SK-N-SH (cell line): ENCODE measurements at regions of chr17 and their contacts with region 1.

Region 1: GRCh38 chr17:68497885-68498319 is 14.3 kb upstream of the PRKAR1A start:
- DNase-seq: no peak
- H3K4me3 ChIP-seq: no peak overlapping the region
- H3K27ac ChIP-seq: no peak overlapping the region
- H3K4me1 ChIP-seq: peaks cover 0 to 6% of the 10 kb centered on the region in 2 experiments; a peak in 1 of 4 replicates
- H3K27me3 ChIP-seq: no peaks in the 10 kb centered on the region; the same call in 1 of the 2 replicates
- CTCF ChIP-seq: no peak
- EP300 ChIP-seq: no peak
- RAD21 ChIP-seq: no peak

Region 2: DNA sequence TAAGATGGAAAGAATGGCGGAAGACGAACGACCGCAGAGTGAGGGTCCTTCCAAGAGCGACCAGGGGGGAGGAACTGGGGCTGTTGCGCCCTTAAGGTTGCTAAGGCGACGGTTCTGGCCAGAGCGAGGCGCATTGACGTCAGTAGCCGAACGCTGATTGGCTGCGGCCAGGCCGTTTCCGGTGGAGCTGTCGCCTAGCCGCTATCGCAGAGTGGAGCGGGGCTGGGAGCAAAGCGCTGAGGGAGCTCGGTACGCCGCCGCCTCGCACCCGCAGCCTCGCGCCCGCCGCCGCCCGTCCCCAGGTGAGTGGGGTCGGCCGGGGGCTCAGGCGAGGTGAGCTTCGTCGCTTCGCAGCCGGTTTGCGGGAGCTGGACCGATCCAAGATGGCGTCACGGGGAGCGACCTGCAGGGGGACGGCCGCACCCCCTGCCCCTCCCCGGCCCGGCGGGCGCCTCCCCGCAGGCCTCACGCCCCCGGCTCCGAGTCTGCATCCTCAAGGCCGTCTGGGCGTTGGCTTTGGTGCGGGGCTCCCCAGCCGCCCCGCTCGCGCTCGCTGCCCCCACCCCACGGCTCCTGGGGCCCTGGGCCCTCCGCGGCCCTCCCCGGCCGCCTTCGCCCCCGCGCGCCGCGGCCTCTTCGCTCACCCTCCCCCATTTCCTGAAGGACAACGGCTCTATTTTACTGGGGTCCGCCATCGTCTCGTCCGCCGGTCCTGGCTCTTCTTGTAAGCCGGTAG is 14.5 kb after region 1 on chr17 and contains the start of gene PRKAR1A:
- CTCF ChIA-PET with region 1: interaction called, 14 read pairs
- POLR2A ChIA-PET with region 1: interaction called, 3 read pairs
- DNase-seq: peak; percentile 98
- H3K4me3 ChIP-seq: peak within 1 kb of the TSS; percentile 78 to 98
- H3K27ac ChIP-seq: peak within 1 kb of the TSS; percentile 97 to 98
- H3K4me1 ChIP-seq: peaks cover 17 to 27% of the 10 kb centered on the region in 2 experiments; a peak in 2 of 4 replicates
- H3K27me3 ChIP-seq: no peaks in the 10 kb centered on the region
- CTCF ChIP-seq: no peak
- EP300 ChIP-seq: peak in 1 of 2 experiments; percentile 3; a peak in 3 of 4 replicates
- RAD21 ChIP-seq: no peak
- polyA plus RNA-seq, gene PRKAR1A: 195 and 224 TPM in 2 replicates